Brain microvascular endothelial cell (primary cell): ENCODE measurements at regions of chr1 and their contacts with region 1.

Region 1: DNA sequence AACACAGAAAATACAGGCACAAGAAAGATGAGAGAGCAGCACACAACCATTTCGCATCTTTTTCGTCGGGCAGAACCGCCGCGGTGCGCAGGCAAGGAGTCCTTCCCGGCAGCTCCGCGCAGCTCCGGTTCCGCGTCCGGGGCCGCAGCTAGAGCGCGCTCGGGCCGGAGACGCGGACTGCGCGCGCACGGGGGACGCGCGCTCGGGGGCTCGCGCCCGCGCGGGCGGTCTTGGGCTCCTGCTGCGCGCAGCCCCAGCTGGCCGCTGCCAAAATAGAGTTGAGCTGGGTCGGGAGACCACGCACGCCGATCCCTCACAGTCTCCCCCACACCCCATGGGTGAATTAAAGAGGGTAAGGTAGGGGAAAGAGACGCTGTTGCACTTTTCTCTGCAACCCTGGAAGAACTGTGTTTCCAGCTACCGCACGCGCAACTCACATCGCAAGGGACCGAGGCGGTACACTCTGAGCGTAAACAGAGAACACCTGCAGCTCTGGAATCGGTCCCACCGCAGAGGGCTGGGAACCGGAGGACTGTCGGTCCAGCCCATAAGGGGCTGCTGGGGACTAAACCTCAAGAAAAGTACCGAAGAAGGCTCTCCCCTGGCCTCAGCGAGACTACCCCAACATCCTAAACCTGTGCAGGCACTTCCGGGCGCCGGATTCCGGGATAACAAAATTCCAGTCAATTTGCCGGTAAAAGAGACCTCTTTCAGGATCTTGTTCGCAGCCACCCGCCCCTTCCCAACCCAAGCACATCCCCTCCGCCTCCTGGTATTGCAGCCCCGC is 1.7 kb downstream of the NR5A2 start:
- DNase-seq: no peak
- H3K4me3 ChIP-seq: peak overlapping the region; percentile 52
- H3K27ac ChIP-seq: no peak overlapping the region
- H3K27me3 ChIP-seq: peaks cover 54% of the 10 kb centered on the region
- CTCF ChIP-seq: no peak

Region 2: DNA sequence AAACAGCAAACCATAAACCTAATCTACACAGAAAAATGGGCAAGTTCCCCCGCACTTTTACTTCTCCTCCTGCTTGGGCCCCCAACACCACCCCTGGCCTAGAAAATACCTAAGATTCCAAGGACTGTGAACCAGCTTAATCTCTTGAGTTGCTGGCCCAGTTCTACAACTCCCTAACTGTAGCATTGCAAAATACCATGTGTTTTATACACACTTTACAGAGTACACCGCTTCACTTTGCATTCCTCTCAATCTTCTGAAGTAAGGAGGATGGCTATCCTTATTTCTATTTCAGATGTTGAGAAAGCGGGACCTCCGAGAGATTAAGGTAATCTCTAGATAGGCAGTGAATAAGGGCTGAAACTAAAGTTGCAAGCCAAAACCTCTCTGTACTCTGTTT is 410.0 kb before region 1 on chr1:
- in situ Hi-C with region 1: no loop called
- DNase-seq: no peak
- H3K4me3 ChIP-seq: no peak overlapping the region
- H3K27ac ChIP-seq: no peak overlapping the region
- H3K27me3 ChIP-seq: no peaks in the 10 kb centered on the region
- CTCF ChIP-seq: no peak

Region 3: GRCh38 chr1:199684686-199685273 is 344.4 kb before region 1 on chr1:
- in situ Hi-C with region 1: loop called (anchors 25 kb)
- DNase-seq: peak; percentile 71
- H3K4me3 ChIP-seq: no peak overlapping the region
- H3K27ac ChIP-seq: peak overlapping the region; percentile 39
- H3K27me3 ChIP-seq: no peaks in the 10 kb centered on the region
- CTCF ChIP-seq: peak; percentile 78